ENCODE measurements at regions of chr17 and their contacts with region 1.

Region 1: GRCh38 chr17:65618516-65618915 is 57.1 kb upstream of the AXIN2 start:
- DNase-seq: no peak
- ATAC-seq: no peak
- H3K4me3 ChIP-seq: no peak overlapping the region
- H3K4me3 Mint-ChIP-seq: no peak overlapping the region
- H3K27ac ChIP-seq: no peak overlapping the region
- H3K27ac Mint-ChIP-seq: no peak overlapping the region
- H3K4me1 ChIP-seq: no peaks in the 10 kb centered on the region
- H3K4me1 Mint-ChIP-seq: no peaks in the 10 kb centered on the region
- H3K27me3 ChIP-seq: no peaks in the 10 kb centered on the region
- H3K27me3 Mint-ChIP-seq: no peaks in the 10 kb centered on the region

Region 2: DNA sequence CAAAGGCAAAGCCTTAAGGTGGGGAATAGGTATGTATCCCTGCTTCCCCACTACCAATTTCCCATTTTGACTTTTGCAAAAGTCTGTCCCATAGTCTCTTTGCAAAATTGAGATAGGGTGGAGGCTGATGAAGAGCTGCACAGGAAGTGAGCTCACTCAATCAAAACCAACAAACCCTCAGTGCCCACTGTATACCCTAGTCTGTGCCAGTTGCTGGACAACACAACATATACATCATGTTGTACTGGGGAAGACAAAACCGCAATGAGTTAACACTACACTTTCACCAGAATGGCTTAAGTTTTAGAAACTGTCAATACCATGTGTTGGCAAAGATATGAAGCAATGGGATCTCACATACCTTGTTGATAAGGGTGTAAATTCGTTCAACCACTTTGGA is 16.6 kb before region 1 on chr17:
- CTCF ChIA-PET with region 1: no interaction called
- POLR2A ChIA-PET with region 1: interaction called in 1 of 2 experiments, 14 read pairs
- DNase-seq: no peak
- ATAC-seq: no peak
- H3K4me3 ChIP-seq: no peak overlapping the region
- H3K4me3 Mint-ChIP-seq: no peak overlapping the region
- H3K27ac ChIP-seq: no peak overlapping the region
- H3K27ac Mint-ChIP-seq: no peak overlapping the region
- H3K4me1 ChIP-seq: peaks cover 0 to 5% of the 10 kb centered on the region in 2 experiments
- H3K4me1 Mint-ChIP-seq: peaks cover 4 to 7% (median 6%) of the 10 kb centered on the region in 3 donors
- H3K27me3 ChIP-seq: peaks cover 0 to 3% of the 10 kb centered on the region in 2 experiments
- H3K27me3 Mint-ChIP-seq: peaks cover 0 to 4% of the 10 kb centered on the region in 2 donors

Region 3: DNA sequence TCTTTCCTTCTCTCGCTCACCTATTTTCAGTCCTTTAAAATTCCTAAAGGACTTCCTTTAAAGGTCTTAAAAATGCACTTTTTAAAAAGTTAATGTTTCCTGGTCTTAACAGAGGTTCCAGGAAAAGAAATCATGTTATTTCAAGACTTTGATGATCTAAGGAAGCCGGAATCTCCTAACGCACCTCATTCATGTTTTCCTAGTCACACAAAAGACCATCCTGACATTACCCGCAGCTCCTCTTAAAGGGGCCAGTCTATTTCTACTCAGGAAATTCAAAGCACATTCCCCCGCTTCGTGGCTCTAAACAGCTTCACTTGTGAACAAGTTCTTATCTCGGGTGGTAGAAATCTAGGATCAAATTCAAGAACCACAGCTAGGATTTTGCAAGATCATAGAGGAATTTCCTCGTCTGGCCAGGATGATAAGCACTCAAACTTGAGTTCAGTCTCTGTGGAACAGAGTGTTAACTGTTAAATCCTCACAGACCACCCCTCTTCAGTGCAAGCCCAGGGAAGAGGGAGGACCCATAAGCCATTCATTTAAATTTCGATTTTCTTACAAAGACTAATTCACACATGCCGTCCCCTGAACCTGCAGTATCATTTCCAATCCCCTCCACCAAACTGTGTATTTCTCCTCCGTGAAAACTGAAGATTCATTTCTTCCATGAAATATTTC is 80.0 kb after region 1 on chr17:
- CTCF ChIA-PET with region 1: no interaction called
- POLR2A ChIA-PET with region 1: no interaction called
- DNase-seq: no peak
- ATAC-seq: no peak
- H3K4me3 ChIP-seq: no peak overlapping the region
- H3K4me3 Mint-ChIP-seq: no peak overlapping the region
- H3K27ac ChIP-seq: no peak overlapping the region
- H3K27ac Mint-ChIP-seq: no peak overlapping the region
- H3K4me1 ChIP-seq: no peaks in the 10 kb centered on the region
- H3K4me1 Mint-ChIP-seq: no peaks in the 10 kb centered on the region
- H3K27me3 ChIP-seq: no peaks in the 10 kb centered on the region
- H3K27me3 Mint-ChIP-seq: peaks cover 9 to 16% of the 10 kb centered on the region in 2 donors

Measured in T-cell (primary cell).